Naive thymus-derived CD4-positive, alpha-beta T cell (primary cell): ENCODE measurements at regions of chr1 and their contacts with region 1.

Region 1: DNA sequence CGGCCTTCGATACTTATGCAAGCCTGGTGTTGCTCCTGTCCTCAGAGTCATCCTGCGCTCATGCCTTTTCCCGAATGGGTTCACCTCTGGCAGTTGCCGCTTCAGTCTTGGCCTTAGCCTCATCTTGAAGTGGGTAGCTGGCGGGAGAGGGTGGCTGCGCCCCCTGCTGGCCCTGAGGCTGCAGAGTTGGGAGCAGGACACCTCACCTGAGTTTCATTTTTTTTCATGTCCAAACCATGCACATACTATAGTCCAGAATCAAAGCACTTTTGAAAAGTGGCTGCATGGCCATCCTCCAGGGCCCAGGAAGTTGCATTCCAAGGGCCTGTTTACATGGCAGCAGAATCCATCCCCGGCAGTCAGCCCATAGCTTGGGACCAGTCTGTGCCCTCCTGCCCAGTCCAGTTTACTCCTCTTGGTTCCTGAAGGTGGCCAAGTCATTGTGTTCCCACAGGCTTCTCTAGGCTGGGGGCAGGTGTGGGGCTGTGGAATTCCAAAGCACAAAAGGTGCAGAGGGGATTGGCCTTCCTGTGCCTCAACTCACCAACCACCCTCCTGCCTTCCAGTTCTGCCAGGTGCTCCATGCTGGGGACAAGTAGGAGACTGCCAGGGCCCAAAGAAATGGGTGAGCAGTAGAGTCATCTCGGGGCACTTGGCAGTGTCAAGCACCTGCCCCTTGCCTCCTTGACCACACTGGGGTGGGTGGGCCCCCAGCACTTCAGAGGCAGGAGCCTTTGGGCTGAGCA is 44.0 kb downstream of the YARS1 start:
- DNase-seq: peak; percentile 52 to 77 (median 67)
- ATAC-seq: peak; percentile 84
- H3K4me3 ChIP-seq: no peak overlapping the region
- H3K4me3 Mint-ChIP-seq: no peak overlapping the region
- H3K27ac ChIP-seq: peak overlapping the region; percentile 24
- H3K27ac Mint-ChIP-seq: peak overlapping the region in 4 of 9 donors; percentile 10 to 77 (median 42)
- H3K4me1 ChIP-seq: no peaks in the 10 kb centered on the region
- H3K4me1 Mint-ChIP-seq: peaks cover 0 to 24% (median 6%) of the 10 kb centered on the region in 7 donors
- H3K27me3 ChIP-seq: no peaks in the 10 kb centered on the region
- H3K27me3 Mint-ChIP-seq: no peaks in the 10 kb centered on the region

Region 2: GRCh38 chr1:32400876-32401631 is 372.1 kb before region 1 on chr1:
- CTCF ChIA-PET with region 1: interaction called, 5 read pairs
- POLR2A ChIA-PET with region 1: no interaction called
- intact Hi-C with region 1: loop called in 1 of 2 experiments (anchors 2 kb)
- DNase-seq: peak in 8 of 9 donors; percentile 25 to 61 (median 34)
- ATAC-seq: peak; percentile 79
- H3K4me3 ChIP-seq: no peak overlapping the region
- H3K4me3 Mint-ChIP-seq: peak overlapping the region in 2 of 10 donors; percentile 21 to 31
- H3K27ac ChIP-seq: no peak overlapping the region
- H3K27ac Mint-ChIP-seq: no peak overlapping the region
- H3K4me1 ChIP-seq: no peaks in the 10 kb centered on the region
- H3K4me1 Mint-ChIP-seq: peaks cover 0 to 5% (median 4%) of the 10 kb centered on the region in 7 donors
- H3K27me3 ChIP-seq: no peaks in the 10 kb centered on the region
- H3K27me3 Mint-ChIP-seq: peaks cover 0 to 20% (median 0%) of the 10 kb centered on the region in 5 donors

Region 3: GRCh38 chr1:32521165-32521564 is 252.0 kb before region 1 on chr1:
- CTCF ChIA-PET with region 1: interaction called, 9 read pairs
- POLR2A ChIA-PET with region 1: no interaction called
- intact Hi-C with region 1: loop called in 1 of 2 experiments (anchors 1 kb)
- DNase-seq: no peak
- ATAC-seq: no peak
- H3K4me3 ChIP-seq: no peak overlapping the region
- H3K4me3 Mint-ChIP-seq: peak overlapping the region in 9 of 10 donors; percentile 48 to 83 (median 66)
- H3K27ac ChIP-seq: no peak overlapping the region
- H3K27ac Mint-ChIP-seq: no peak overlapping the region
- H3K4me1 ChIP-seq: no peaks in the 10 kb centered on the region
- H3K4me1 Mint-ChIP-seq: peaks cover 0 to 14% (median 5%) of the 10 kb centered on the region in 7 donors
- H3K27me3 ChIP-seq: no peaks in the 10 kb centered on the region
- H3K27me3 Mint-ChIP-seq: peaks cover 5 to 19% (median 8%) of the 10 kb centered on the region in 5 donors

Region 4: DNA sequence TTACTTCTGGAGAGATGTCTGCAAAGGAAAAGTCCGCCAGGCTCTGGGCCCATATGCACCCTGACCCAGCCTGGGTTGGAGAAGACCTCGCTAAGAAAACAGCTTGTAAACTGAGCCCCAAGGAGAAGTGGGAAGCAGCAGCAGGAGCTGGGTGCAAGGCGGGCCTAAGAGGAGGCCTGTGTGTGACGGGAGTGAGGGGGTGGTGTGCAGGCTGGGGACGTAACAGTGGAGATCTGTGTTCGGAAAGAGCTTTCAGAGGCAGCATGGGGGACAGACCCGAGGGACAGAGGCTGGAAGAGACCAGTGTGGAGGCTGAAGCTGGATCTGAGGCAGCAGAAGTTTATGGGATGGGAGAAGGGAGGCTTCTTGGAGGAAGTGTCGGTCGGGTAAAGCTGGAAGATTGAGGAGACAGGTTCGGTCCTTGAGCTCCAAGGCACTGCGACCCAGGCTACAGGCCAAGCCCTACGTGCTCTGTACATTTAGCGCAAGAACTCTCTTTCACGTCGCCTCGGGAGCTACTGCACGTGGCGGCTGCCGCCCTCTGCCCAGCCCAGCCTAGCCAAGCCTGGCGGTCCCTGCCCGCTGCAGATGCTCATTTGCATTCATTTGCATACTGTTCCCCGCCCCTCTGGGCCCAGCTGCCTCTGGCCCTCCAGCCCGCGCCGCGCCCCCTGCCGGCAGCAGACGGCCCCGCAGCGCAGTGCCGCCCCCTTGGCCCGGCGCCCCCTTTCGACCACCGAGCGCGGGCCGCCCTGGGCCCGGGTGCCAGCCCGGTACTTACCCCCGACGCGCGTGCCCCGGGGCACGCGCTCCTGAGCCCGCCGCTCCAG is 119.4 kb after region 1 on chr1:
- CTCF ChIA-PET with region 1: no interaction called
- POLR2A ChIA-PET with region 1: no interaction called
- intact Hi-C with region 1: no loop called
- DNase-seq: peak in 1 of 9 donors; percentile 64
- ATAC-seq: peak; percentile 65
- H3K4me3 ChIP-seq: no peak overlapping the region
- H3K4me3 Mint-ChIP-seq: peak overlapping the region; percentile 51 to 75 (median 66)
- H3K27ac ChIP-seq: no peak overlapping the region
- H3K27ac Mint-ChIP-seq: no peak overlapping the region
- H3K4me1 ChIP-seq: no peaks in the 10 kb centered on the region
- H3K4me1 Mint-ChIP-seq: peaks cover 5 to 13% (median 8%) of the 10 kb centered on the region in 7 donors
- H3K27me3 ChIP-seq: peaks cover 0 to 24% of the 10 kb centered on the region in 2 donors
- H3K27me3 Mint-ChIP-seq: peaks cover 60 to 69% (median 64%) of the 10 kb centered on the region in 5 donors